GM12878 (cell line): ENCODE measurements at regions of chr6 and their contacts with region 1.

Region 1: DNA sequence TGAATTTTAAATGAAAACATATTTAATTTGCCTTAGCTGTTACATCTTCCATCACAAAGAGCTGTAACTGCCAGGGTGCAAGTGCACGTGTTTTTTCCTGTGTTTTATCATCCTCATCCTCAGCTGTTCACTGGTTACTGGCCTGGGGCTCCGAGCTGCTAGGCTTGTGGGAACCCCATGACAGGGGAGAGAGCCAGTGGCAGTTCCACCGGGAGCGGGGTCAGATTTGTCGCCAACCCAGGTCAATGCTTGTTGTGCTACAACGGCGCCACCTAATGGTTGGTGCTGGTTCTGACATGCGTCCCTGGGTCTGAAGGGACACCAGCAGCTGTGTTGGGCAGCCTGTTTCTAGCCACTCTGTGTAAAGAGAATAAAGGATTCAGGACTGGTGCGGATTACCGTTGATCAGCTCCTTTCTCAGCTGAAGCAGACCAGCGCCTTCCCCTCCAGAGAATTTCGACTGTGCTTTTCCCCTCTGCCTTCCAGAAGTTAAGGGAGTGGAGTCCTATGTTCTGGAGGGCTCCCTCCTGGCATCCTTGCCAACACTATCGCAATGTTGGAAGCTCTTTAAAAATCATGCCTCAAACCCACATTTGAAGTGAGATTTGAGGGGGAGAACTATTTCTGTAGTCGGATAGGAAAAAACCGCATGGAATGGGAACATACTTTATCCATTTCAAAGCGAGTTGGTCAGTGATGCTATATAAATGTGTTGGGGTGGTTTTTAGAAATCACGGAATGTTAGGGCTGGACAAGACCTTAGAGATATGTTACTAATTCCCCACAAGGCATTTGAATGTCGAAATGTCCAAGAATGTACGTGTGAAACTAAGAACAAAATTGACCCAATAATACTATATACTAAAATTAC is 32.1 kb downstream of the SUMO4 start:
- DNase-seq: peak; percentile 60
- ATAC-seq: peak; percentile 99
- H3K4me3 ChIP-seq: no peak overlapping the region
- H3K27ac ChIP-seq: no peak overlapping the region
- H3K4me1 ChIP-seq: no peaks in the 10 kb centered on the region
- H3K27me3 ChIP-seq: no peaks in the 10 kb centered on the region; a peak in 1 of 4 replicates
- CTCF ChIP-seq: peak; percentile 87 to 95 (median 93)
- EP300 ChIP-seq: no peak
- POLR2A ChIP-seq: no peak
- RAD21 ChIP-seq: peak; percentile 94

Region 2: DNA sequence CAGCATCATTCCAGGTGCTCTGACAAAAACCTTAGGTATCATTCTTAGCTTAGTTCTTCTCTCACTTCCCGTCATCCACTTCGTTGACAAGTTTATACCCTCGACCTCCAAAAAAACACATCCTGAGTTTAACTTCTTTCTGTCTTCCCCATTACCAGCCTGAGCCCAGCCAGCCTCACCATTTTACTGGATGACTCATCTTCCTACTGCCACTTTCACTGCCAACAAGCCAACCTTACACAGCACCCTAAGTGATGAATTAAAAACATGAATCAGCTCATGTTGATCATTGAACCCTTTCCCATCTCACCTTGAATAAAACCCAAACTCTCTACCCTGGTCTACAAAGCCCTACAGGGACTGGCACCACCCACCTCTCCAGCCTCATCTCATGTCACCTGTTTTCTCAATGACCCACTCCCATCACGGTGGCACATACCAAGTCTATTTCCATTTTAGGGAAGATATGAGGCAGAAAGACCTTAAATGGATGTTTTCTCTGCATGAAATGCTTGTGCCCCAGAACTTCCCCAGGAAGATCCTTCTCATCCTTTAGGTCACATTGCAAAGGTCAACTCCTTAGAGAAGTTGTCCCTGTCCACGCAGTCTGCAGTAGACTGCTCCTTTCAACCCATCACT is 695.2 kb before region 1 on chr6:
- CTCF ChIA-PET with region 1: no interaction called
- POLR2A ChIA-PET with region 1: no interaction called
- RAD21 ChIA-PET with region 1: no interaction called
- SMC1A ChIA-PET with region 1: no interaction called
- in situ Hi-C with region 1: no loop called
- intact Hi-C with region 1: no loop called
- DNase-seq: no peak
- ATAC-seq: peak; percentile 64
- H3K4me3 ChIP-seq: no peak overlapping the region
- H3K27ac ChIP-seq: no peak overlapping the region
- H3K4me1 ChIP-seq: no peaks in the 10 kb centered on the region
- H3K27me3 ChIP-seq: peaks cover 0 to 2% of the 10 kb centered on the region in 2 experiments; a peak in 3 of 4 replicates
- CTCF ChIP-seq: no peak
- EP300 ChIP-seq: no peak
- POLR2A ChIP-seq: no peak
- RAD21 ChIP-seq: no peak

Region 3: DNA sequence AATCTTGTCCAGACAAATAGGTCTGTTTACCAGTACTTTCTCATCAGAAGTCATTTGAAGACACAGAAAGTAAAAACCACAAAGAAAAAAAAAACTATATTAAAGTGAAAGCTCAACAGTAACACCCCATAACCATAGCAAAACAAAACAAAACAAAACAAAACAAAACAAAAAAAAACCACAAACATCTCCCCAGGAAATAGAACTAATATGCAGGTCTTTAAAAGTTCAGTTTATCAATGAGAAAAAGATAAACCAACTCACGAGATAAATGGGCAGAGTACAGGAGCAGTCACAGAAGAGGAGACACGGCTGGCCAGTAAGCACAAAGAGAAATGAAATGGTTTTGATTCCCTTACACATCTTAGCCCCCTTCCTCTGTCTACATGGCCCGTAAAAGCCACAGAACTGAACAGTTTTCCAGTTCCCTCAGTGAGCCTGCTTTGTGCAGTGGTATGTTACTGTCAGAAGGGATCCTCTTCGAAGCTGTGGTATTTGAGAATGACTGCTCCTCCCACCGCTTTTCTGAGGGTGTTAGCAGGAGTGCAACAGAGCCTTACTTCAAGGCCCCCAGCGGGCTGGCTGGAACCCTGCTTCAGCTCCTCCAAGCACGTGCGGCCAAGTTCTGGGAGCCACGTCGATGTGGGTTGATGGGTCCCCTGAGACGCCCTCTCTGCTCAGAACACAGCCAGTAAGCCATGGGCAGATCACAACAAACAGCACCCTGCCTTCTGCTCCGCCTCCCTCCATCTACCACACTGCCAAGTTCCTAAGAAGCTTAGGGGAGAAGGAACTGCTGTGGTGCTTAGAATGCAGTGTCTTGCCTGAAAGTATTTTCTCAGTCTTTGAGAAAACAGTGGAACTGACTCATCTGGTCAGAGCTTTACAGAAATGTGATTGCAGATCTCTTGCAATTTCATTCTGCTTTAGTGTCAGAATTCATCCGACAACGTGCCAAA is 671.3 kb before region 1 on chr6:
- CTCF ChIA-PET with region 1: interaction called, 4 read pairs
- POLR2A ChIA-PET with region 1: no interaction called
- RAD21 ChIA-PET with region 1: no interaction called
- SMC1A ChIA-PET with region 1: no interaction called
- in situ Hi-C with region 1: loop called (anchors 25 kb)
- intact Hi-C with region 1: loop called (anchors 10 kb)
- DNase-seq: peak; percentile 64
- ATAC-seq: peak; percentile 63
- H3K4me3 ChIP-seq: peak overlapping the region; percentile 39; the same call in 1 of the 2 replicates
- H3K27ac ChIP-seq: peak overlapping the region; percentile 85
- H3K4me1 ChIP-seq: peaks cover 43% of the 10 kb centered on the region
- H3K27me3 ChIP-seq: no peaks in the 10 kb centered on the region
- CTCF ChIP-seq: no peak
- EP300 ChIP-seq: peak; percentile 40 to 75; a peak in 3 of 4 replicates
- POLR2A ChIP-seq: peak; percentile 73
- RAD21 ChIP-seq: no peak

Region 4: GRCh38 chr6:149054559-149055194 is 377.5 kb before region 1 on chr6:
- CTCF ChIA-PET with region 1: interaction called, 12 read pairs
- POLR2A ChIA-PET with region 1: no interaction called
- RAD21 ChIA-PET with region 1: interaction called, 10 read pairs
- SMC1A ChIA-PET with region 1: interaction called, 9 read pairs
- in situ Hi-C with region 1: no loop called
- intact Hi-C with region 1: no loop called
- DNase-seq: peak; percentile 86
- ATAC-seq: peak; percentile 85
- H3K4me3 ChIP-seq: peak overlapping the region; percentile 53; the same call in 1 of the 2 replicates
- H3K27ac ChIP-seq: peak overlapping the region; percentile 90
- H3K4me1 ChIP-seq: peaks cover 37% of the 10 kb centered on the region
- H3K27me3 ChIP-seq: no peaks in the 10 kb centered on the region
- CTCF ChIP-seq: no peak
- EP300 ChIP-seq: no peak
- POLR2A ChIP-seq: no peak
- RAD21 ChIP-seq: no peak

Region 5: DNA sequence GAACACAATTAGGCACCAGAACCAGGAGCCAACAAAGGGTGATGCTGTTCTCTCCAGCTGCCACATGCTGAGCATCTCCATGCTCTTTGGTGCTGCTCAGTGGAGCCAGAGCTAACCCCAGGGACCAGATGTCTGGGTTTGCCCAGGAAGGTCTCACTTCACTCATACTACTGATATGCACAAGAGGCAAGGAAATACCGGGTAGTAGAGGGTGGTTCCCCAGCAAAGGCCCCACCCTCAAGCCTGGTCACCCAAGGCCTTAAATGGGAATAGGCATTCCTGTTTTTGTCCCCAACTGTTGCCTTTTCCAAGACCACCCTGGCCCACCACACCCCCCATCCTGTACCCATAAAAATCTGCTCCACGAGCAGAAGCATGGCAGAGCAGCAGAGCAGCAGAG is 319.2 kb before region 1 on chr6:
- CTCF ChIA-PET with region 1: interaction called, 16 read pairs
- POLR2A ChIA-PET with region 1: no interaction called
- RAD21 ChIA-PET with region 1: interaction called, 14 read pairs
- SMC1A ChIA-PET with region 1: interaction called, 15 read pairs
- in situ Hi-C with region 1: no loop called
- intact Hi-C with region 1: no loop called
- DNase-seq: no peak
- ATAC-seq: peak; percentile 82
- H3K4me3 ChIP-seq: no peak overlapping the region
- H3K27ac ChIP-seq: peak overlapping the region; percentile 74
- H3K4me1 ChIP-seq: peaks cover 50% of the 10 kb centered on the region
- H3K27me3 ChIP-seq: no peaks in the 10 kb centered on the region
- CTCF ChIP-seq: no peak
- EP300 ChIP-seq: no peak
- POLR2A ChIP-seq: no peak
- RAD21 ChIP-seq: no peak

Region 6: GRCh38 chr6:149335924-149336608 is 96.1 kb before region 1 on chr6:
- CTCF ChIA-PET with region 1: interaction called, 18 read pairs
- POLR2A ChIA-PET with region 1: no interaction called
- RAD21 ChIA-PET with region 1: interaction called, 5 read pairs
- SMC1A ChIA-PET with region 1: interaction called, 7 read pairs
- in situ Hi-C with region 1: no loop called
- intact Hi-C with region 1: no loop called
- DNase-seq: no peak
- ATAC-seq: peak; percentile 50
- H3K4me3 ChIP-seq: peak overlapping the region; percentile 32; the same call in 1 of the 2 replicates
- H3K27ac ChIP-seq: peak overlapping the region; percentile 73
- H3K4me1 ChIP-seq: peaks cover 36% of the 10 kb centered on the region
- H3K27me3 ChIP-seq: no peaks in the 10 kb centered on the region
- CTCF ChIP-seq: no peak
- EP300 ChIP-seq: no peak
- POLR2A ChIP-seq: no peak
- RAD21 ChIP-seq: no peak

Region 7: DNA sequence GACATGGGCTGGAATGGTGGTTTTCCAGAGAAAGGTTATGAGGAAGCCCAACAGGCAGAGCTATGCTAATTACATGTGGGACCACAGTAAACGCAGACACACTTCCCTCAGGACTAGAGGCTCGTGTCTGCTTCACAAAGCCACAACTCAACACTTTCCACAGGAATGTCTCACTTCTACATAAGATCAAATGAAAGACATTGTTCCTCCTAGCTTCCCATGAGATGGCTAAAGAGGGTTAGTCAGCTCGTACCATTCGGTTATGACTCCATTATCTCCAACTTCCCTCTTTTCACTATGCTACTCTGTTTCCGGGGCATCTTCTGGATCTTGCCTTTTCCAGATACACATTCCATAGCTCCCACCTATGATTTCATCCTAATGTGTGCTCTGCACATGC is 81.8 kb after region 1 on chr6:
- CTCF ChIA-PET with region 1: interaction called, 103 read pairs
- POLR2A ChIA-PET with region 1: no interaction called
- RAD21 ChIA-PET with region 1: interaction called, 78 read pairs
- SMC1A ChIA-PET with region 1: interaction called, 100 read pairs
- in situ Hi-C with region 1: no loop called
- intact Hi-C with region 1: loop called (anchors 2 kb)
- DNase-seq: no peak
- ATAC-seq: no peak
- H3K4me3 ChIP-seq: no peak overlapping the region
- H3K27ac ChIP-seq: no peak overlapping the region
- H3K4me1 ChIP-seq: no peaks in the 10 kb centered on the region
- H3K27me3 ChIP-seq: no peaks in the 10 kb centered on the region
- CTCF ChIP-seq: no peak
- EP300 ChIP-seq: no peak
- POLR2A ChIP-seq: no peak
- RAD21 ChIP-seq: no peak

Region 8: GRCh38 chr6:149593443-149593842 is 161.3 kb after region 1 on chr6:
- CTCF ChIA-PET with region 1: no interaction called
- POLR2A ChIA-PET with region 1: no interaction called
- RAD21 ChIA-PET with region 1: no interaction called
- SMC1A ChIA-PET with region 1: no interaction called
- in situ Hi-C with region 1: no loop called
- intact Hi-C with region 1: no loop called
- DNase-seq: no peak
- ATAC-seq: no peak
- H3K4me3 ChIP-seq: no peak overlapping the region
- H3K27ac ChIP-seq: no peak overlapping the region
- H3K4me1 ChIP-seq: no peaks in the 10 kb centered on the region
- H3K27me3 ChIP-seq: no peaks in the 10 kb centered on the region
- CTCF ChIP-seq: no peak
- EP300 ChIP-seq: no peak
- POLR2A ChIP-seq: no peak
- RAD21 ChIP-seq: no peak